Activated naive CD4-positive, alpha-beta T cell treated with anti-CD3 and anti-CD28 coated beads for 36 hours (primary cell): ENCODE measurements at regions of chr6 and their contacts with region 1.

Region 1: GRCh38 chr6:122438975-122439374 is 32.6 kb downstream of the SERINC1 start:
- DNase-seq: peak; percentile 8
- H3K4me3 Mint-ChIP-seq: no peak overlapping the region
- H3K27ac Mint-ChIP-seq: no peak overlapping the region
- H3K4me1 Mint-ChIP-seq: no peaks in the 10 kb centered on the region
- H3K27me3 Mint-ChIP-seq: no peaks in the 10 kb centered on the region

Region 2: DNA sequence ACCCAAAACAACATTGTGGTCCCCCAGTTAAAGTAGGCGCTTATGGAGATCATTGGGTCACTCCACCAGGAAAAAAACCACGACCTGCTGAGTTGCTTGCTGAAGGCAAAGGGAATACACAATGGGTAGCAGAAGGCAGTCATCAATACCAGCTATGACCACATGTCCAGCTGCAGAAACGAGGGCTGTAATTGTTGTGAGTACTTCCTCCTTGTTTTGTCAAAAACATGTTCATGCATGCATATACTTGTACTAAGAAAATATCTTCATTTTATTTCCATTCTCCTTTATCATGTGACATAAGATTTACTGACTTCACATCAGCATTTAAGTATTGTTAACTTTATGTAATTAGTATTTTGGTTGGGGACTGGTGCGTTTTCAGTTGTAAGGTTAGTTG is 15.7 kb after region 1 on chr6:
- CTCF ChIA-PET with region 1: no interaction called
- intact Hi-C with region 1: loop called (anchors 2 kb)
- DNase-seq: no peak
- H3K4me3 Mint-ChIP-seq: no peak overlapping the region
- H3K27ac Mint-ChIP-seq: peak overlapping the region; percentile 27
- H3K4me1 Mint-ChIP-seq: peaks cover 39% of the 10 kb centered on the region
- H3K27me3 Mint-ChIP-seq: no peaks in the 10 kb centered on the region